GM13976 (cell line): ENCODE measurements at regions of chr2 and their contacts with region 1.

Region 1: DNA sequence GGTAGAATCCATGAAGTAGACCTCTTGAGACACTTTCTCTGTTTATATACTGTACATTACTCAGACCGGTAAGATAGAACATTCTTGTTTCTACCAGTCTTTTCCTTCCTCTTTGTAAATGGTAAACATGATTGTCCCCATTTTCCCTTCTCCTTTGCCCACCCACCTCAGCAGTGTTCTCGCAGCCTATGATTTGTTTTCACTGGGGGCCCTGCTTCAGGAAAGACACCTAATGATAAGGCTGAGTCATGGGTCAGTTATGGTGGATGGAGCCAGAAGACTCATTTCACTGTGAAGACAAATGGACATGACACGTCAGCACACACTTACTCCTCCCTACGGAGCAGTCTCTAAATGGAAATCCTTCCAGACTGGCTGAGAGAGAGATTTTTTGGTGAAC is 23.7 kb downstream of the CENPO start:
- DNase-seq: no peak
- CTCF ChIP-seq: no peak

Region 2: GRCh38 chr2:24409700-24410556 is 407.0 kb before region 1 on chr2:
- in situ Hi-C with region 1: loop called (anchors 10 kb)
- DNase-seq: peak; percentile 75
- CTCF ChIP-seq: peak; percentile 58

Region 3: GRCh38 chr2:24959761-24960160 is 142.9 kb after region 1 on chr2:
- in situ Hi-C with region 1: no loop called
- DNase-seq: no peak
- CTCF ChIP-seq: no peak